ENCODE measurements at regions of chr2 and their contacts with region 1.

Region 1: GRCh38 chr2:85409845-85410583 is at the start of gene CAPG:
- DNase-seq: peak; percentile 72 to 89
- H3K4me3 ChIP-seq: peak within 1 kb of the TSS; percentile 49
- H3K27ac ChIP-seq: peak within 1 kb of the TSS; percentile 88
- H3K4me1 ChIP-seq: peaks cover 56% of the 10 kb centered on the region
- H3K27me3 ChIP-seq: no peaks in the 10 kb centered on the region
- CTCF ChIP-seq: no peak
- total RNA-seq, gene CAPG: 417 and 428 TPM in 2 replicates

Region 2: DNA sequence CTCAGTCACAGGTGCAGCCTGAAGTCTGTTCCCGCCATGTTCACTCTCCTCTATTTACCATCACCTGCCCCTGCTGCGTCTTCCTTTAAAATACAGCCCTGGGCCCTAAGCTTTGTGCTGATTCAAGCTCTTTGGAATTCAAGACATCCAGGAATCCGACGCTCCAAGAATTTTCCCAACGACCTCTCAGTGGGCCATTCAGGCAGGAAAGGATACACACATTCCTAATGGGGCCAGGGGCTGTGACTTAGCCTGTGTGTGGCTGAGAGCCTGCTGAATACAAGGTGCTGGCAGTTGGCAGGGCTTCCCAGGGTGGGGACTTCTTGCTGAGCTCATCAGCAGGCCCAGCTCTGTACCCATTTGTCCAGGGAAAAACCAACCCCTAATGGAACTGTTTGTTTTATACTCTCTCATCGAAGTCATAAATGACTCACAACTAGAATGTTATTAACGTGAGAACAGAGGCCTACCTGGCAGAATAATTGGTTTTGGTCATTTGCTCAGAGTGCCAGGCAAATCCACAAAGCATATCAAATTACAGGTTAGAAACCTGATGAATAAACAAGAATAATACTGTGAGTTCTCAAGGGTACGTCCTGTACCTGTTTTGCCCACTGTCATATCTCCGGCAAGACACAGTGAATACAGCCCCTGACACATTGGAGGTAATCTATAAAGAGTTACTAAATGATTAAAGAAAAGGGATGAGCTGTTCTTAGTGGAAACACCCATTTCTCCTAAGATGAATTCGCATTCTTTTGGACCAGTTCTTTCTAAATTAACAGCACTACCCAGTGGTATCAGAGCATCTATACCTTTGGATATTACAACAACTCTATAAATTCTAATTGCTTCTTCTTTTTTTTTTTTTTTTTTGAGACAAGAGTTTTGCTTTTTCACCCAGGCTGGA is 451.6 kb before region 1 on chr2:
- CTCF ChIA-PET with region 1: no interaction called
- POLR2A ChIA-PET with region 1: no interaction called
- intact Hi-C with region 1: loop called (anchors 5 kb)
- DNase-seq: peak; percentile 88 to 98
- H3K4me3 ChIP-seq: peak overlapping the region; percentile 27; the same call in 1 of the 2 replicates
- H3K27ac ChIP-seq: peak overlapping the region; percentile 99
- H3K4me1 ChIP-seq: peaks cover 49% of the 10 kb centered on the region
- H3K27me3 ChIP-seq: no peaks in the 10 kb centered on the region
- CTCF ChIP-seq: no peak

Region 3: GRCh38 chr2:85327822-85328617 is 82.0 kb before region 1 on chr2 and contains the start of gene TGOLN2:
- CTCF ChIA-PET with region 1: no interaction called
- POLR2A ChIA-PET with region 1: no interaction called
- intact Hi-C with region 1: loop called (anchors 5 kb)
- DNase-seq: peak; percentile 75 to 85
- H3K4me3 ChIP-seq: peak within 1 kb of the TSS; percentile 93
- H3K27ac ChIP-seq: peak within 1 kb of the TSS; percentile 68
- H3K4me1 ChIP-seq: peaks cover 30% of the 10 kb centered on the region
- H3K27me3 ChIP-seq: no peaks in the 10 kb centered on the region
- CTCF ChIP-seq: no peak; the same call in 1 of the 2 replicates
- total RNA-seq, gene TGOLN2: 86.1 and 87.2 TPM in 2 replicates

Region 4: DNA sequence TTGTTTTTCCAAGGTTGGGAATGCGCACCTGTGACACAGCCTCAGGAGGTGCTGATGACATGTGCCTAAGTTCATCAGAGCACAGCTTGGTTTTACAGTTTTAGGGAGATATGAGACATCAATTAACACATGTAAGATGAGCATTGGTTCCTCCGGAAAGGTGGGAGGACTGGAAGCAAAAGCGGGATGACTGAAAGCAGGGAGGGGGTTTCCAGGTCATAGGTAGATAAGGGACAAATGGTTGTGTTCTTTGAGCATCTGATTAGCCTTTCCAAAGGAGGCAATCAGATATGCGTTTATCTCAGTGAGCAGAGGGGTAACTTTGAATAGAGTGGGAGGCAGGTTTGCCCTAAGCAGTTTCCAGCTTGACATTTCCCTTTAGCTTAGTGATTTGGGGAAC is 26.2 kb before region 1 on chr2:
- CTCF ChIA-PET with region 1: no interaction called
- POLR2A ChIA-PET with region 1: interaction called, 31 read pairs
- intact Hi-C with region 1: no loop called
- DNase-seq: no peak
- H3K4me3 ChIP-seq: no peak overlapping the region
- H3K27ac ChIP-seq: peak overlapping the region; percentile 46; the same call in 1 of the 2 replicates
- H3K4me1 ChIP-seq: peaks cover 12% of the 10 kb centered on the region
- H3K27me3 ChIP-seq: no peaks in the 10 kb centered on the region
- CTCF ChIP-seq: no peak

Region 5: DNA sequence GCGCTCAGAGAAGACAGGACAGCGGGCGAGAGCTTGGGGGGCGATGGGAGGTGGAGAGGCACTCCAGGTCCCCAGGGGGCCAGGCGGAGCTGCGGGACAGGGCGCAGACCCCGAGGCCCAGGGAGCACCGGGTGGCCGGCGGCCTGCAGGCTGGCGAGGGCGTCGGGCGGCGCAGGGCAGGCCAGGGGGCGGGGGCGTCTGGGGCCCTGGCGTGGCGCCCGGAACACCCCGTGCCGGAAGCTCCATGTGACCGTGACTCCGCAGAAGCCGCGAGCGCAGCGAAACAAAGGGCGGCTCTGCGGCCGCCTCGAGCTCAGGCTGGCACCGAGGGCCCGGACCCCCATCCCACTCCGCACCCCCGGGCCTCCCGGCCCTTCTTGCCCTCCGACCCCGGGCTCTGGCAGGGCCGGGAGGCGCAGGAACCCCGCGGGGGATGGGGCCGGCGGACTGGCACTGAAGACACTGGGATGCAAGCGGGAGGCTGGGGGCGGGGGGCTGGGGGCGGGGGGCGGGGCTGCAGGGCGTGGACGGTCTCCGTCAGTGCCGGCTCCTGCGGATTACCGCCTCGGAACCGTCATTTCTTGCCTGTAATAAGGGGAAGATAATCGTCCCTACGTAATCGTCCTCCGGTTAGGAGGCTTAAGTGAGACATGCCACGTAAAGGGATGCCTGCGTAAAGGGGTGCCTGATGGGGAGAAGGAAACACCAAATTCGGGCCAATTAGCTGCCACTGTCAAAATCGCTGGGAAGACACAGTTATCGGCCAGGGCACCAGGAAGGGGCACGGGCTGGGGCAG is 27.7 kb after region 1 on chr2:
- CTCF ChIA-PET with region 1: no interaction called
- POLR2A ChIA-PET with region 1: interaction called, 20 read pairs
- intact Hi-C with region 1: no loop called
- DNase-seq: peak in 1 of 2 experiments; percentile 74
- H3K4me3 ChIP-seq: peak overlapping the region; percentile 42; the same call in 1 of the 2 replicates
- H3K27ac ChIP-seq: peak overlapping the region; percentile 27; the same call in 1 of the 2 replicates
- H3K4me1 ChIP-seq: peaks cover 36% of the 10 kb centered on the region
- H3K27me3 ChIP-seq: no peaks in the 10 kb centered on the region
- CTCF ChIP-seq: no peak

Region 6: DNA sequence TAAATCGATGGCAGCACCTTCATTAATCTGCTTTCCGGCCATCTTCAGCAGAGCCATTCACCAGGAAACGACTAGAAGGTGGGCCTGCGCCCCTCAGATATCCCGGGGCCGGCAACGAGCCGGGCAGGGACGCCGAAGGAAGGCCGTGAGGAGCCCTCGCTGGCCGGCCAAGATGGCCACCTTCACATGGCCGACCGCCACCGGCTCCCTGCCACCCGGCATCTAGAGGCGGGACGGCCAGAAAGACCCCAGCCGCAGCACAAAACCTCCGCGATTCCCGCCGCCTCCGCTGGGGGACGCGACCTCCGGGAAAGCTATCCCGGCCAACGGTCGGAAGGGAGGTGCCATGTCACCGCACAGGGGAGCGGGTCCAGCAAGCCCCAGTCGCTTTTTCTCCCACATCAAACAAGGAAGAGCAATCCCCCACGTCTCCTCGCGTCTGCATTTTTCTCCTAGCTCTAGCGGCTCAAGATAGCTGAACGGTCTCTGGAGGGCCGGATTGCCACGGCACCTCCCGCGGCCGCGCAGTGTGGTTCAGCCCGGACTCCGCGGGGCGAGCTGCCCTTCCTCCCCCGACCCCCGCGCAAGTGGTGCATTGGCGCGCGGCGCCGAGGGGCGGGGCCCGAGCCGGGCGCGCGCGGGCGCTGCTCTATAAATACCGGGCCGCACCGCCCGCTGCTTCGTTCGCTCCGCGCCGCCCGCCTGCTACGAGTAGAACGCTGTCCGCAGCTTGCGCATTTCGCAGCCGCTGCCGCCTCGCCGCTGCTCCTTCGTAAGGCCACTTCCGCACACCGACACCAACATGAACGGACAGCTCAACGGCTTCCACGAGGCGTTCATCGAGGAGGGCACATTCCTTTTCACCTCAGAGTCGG is 128.7 kb after region 1 on chr2 and contains the start of gene MAT2A:
- CTCF ChIA-PET with region 1: no interaction called
- POLR2A ChIA-PET with region 1: interaction called, 12 read pairs
- intact Hi-C with region 1: no loop called
- DNase-seq: peak; percentile 81 to 91
- H3K4me3 ChIP-seq: peak within 1 kb of the TSS; percentile 100
- H3K27ac ChIP-seq: peak within 1 kb of the TSS; percentile 97
- H3K4me1 ChIP-seq: peaks cover 38% of the 10 kb centered on the region
- H3K27me3 ChIP-seq: no peaks in the 10 kb centered on the region
- CTCF ChIP-seq: peak; percentile 69
- total RNA-seq, gene MAT2A: 169 and 206 TPM in 2 replicates

Measured in PC-9 (cell line).